ENCODE measurements at regions of chr7 and their contacts with region 1.

Region 1: GRCh38 chr7:130896898-130897514 is 163.0 kb upstream of the KLF14 start:
- DNase-seq: peak; percentile 80 to 84
- H3K4me3 ChIP-seq: no peak overlapping the region
- H3K4me3 Mint-ChIP-seq: peak overlapping the region; percentile 21
- H3K27ac Mint-ChIP-seq: peak overlapping the region; percentile 78
- H3K4me1 ChIP-seq: peaks cover 47% of the 10 kb centered on the region
- H3K4me1 Mint-ChIP-seq: peaks cover 35% of the 10 kb centered on the region
- H3K27me3 ChIP-seq: no peaks in the 10 kb centered on the region
- H3K27me3 Mint-ChIP-seq: no peaks in the 10 kb centered on the region
- CTCF ChIP-seq: peak; percentile 82 to 88

Region 2: GRCh38 chr7:130884437-130885417 is 12.3 kb before region 1 on chr7:
- CTCF ChIA-PET with region 1: interaction called, 17 read pairs
- POLR2A ChIA-PET with region 1: no interaction called
- intact Hi-C with region 1: no loop called
- DNase-seq: peak in 1 of 2 experiments; percentile 49
- H3K4me3 ChIP-seq: no peak overlapping the region
- H3K4me3 Mint-ChIP-seq: no peak overlapping the region
- H3K27ac Mint-ChIP-seq: peak overlapping the region; percentile 60
- H3K4me1 ChIP-seq: peaks cover 18% of the 10 kb centered on the region
- H3K4me1 Mint-ChIP-seq: peaks cover 27% of the 10 kb centered on the region
- H3K27me3 ChIP-seq: no peaks in the 10 kb centered on the region
- H3K27me3 Mint-ChIP-seq: no peaks in the 10 kb centered on the region
- CTCF ChIP-seq: no peak

Region 3: DNA sequence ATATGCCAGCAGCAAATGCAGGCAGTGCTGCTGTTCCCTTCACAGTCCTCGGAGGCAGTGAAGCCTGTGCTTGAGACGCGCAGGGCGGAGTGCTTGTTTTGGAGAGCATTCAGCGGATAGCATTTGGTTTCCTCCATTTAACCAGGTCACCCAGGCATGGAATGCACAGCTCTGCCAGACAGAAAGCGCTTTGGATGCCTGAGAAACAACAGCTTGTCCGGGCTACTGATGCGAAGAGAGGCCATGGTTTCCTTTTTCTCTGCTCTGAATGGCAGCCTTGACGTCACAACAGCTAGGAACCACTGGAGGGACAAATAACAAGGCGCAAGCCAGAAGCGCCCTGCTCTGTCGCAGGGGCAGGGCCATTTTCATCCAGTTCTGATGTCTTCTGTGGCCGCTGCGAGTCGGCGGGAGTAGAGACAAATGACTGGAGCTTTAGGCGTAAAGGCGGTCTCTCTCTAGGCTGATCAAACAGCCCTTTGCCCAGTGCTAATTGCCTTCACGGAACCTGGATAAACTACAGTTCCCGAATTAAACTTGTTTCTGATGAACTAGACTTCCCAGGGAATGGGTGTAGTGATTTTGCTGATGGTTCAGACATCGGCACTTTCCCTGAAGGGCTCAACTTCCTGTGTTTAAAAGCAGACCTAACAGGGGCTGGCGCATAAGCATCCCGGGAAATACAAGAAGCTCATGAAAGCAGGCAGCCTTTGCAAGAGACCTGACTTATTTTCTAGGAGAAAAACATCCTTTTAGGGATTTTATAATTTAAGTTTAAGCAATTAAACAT is 24.6 kb after region 1 on chr7:
- CTCF ChIA-PET with region 1: interaction called, 12 read pairs
- POLR2A ChIA-PET with region 1: no interaction called
- intact Hi-C with region 1: loop called (anchors 1 kb)
- DNase-seq: no peak
- H3K4me3 ChIP-seq: no peak overlapping the region
- H3K4me3 Mint-ChIP-seq: no peak overlapping the region
- H3K27ac Mint-ChIP-seq: peak overlapping the region; percentile 98
- H3K4me1 ChIP-seq: peaks cover 68% of the 10 kb centered on the region
- H3K4me1 Mint-ChIP-seq: peaks cover 30% of the 10 kb centered on the region
- H3K27me3 ChIP-seq: no peaks in the 10 kb centered on the region
- H3K27me3 Mint-ChIP-seq: no peaks in the 10 kb centered on the region
- CTCF ChIP-seq: no peak

Region 4: GRCh38 chr7:130961128-130961601 is 64.2 kb after region 1 on chr7:
- CTCF ChIA-PET with region 1: interaction called, 8 read pairs
- POLR2A ChIA-PET with region 1: no interaction called
- intact Hi-C with region 1: loop called (anchors 5 kb)
- DNase-seq: no peak
- H3K4me3 ChIP-seq: no peak overlapping the region
- H3K4me3 Mint-ChIP-seq: no peak overlapping the region
- H3K27ac Mint-ChIP-seq: peak overlapping the region; percentile 78
- H3K4me1 ChIP-seq: no peaks in the 10 kb centered on the region
- H3K4me1 Mint-ChIP-seq: peaks cover 7% of the 10 kb centered on the region
- H3K27me3 ChIP-seq: no peaks in the 10 kb centered on the region
- H3K27me3 Mint-ChIP-seq: no peaks in the 10 kb centered on the region
- CTCF ChIP-seq: no peak

Region 5: DNA sequence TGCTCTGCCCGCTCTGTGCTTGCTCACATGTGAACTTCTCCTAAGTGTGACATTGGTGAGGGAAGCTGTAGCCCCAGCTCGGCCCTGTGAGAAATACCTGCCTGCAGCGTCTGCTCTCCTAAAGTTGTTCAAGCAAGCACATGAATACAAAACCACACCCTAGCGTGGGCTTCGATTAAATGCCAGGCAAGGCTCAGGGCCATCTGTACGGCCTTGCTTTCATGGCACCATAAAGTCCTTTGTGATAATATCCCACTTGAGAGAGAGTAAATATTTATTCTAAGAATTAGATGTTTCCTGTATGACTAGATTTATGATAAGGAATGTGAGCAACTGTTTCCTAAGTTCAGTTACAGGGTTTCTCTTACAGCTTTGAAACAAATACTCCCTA is 99.8 kb after region 1 on chr7:
- CTCF ChIA-PET with region 1: interaction called, 24 read pairs
- POLR2A ChIA-PET with region 1: no interaction called
- intact Hi-C with region 1: no loop called
- DNase-seq: peak; percentile 78 to 89
- H3K4me3 ChIP-seq: no peak overlapping the region
- H3K4me3 Mint-ChIP-seq: peak overlapping the region; percentile 50
- H3K27ac Mint-ChIP-seq: peak overlapping the region; percentile 80
- H3K4me1 ChIP-seq: peaks cover 59% of the 10 kb centered on the region
- H3K4me1 Mint-ChIP-seq: peaks cover 54% of the 10 kb centered on the region
- H3K27me3 ChIP-seq: no peaks in the 10 kb centered on the region
- H3K27me3 Mint-ChIP-seq: no peaks in the 10 kb centered on the region
- CTCF ChIP-seq: no peak

Region 6: GRCh38 chr7:131040467-131040932 is 143.5 kb after region 1 on chr7:
- CTCF ChIA-PET with region 1: interaction called, 39 read pairs
- POLR2A ChIA-PET with region 1: no interaction called
- intact Hi-C with region 1: loop called (anchors 1 kb)
- DNase-seq: peak; percentile 40 to 65
- H3K4me3 ChIP-seq: no peak overlapping the region
- H3K4me3 Mint-ChIP-seq: no peak overlapping the region
- H3K27ac Mint-ChIP-seq: no peak overlapping the region
- H3K4me1 ChIP-seq: no peaks in the 10 kb centered on the region
- H3K4me1 Mint-ChIP-seq: peaks cover 6% of the 10 kb centered on the region
- H3K27me3 ChIP-seq: no peaks in the 10 kb centered on the region
- H3K27me3 Mint-ChIP-seq: no peaks in the 10 kb centered on the region
- CTCF ChIP-seq: peak; percentile 88 to 93

Measured in Caco-2 (cell line).